ENCODE measurements at regions of chr1 and their contacts with region 1.

Region 1: GRCh38 chr1:231272880-231273279 is 31.9 kb downstream of the GNPAT start:
- DNase-seq: peak; percentile 16
- H3K4me3 Mint-ChIP-seq: peak overlapping the region; percentile 71
- H3K27ac Mint-ChIP-seq: peak overlapping the region; percentile 99
- H3K4me1 Mint-ChIP-seq: peaks cover 36% of the 10 kb centered on the region
- H3K27me3 Mint-ChIP-seq: no peaks in the 10 kb centered on the region

Region 2: GRCh38 chr1:230972855-230973271 is 300.0 kb before region 1 on chr1:
- intact Hi-C with region 1: loop called (anchors 2 kb)
- DNase-seq: peak; percentile 65
- H3K4me3 Mint-ChIP-seq: peak overlapping the region; percentile 54
- H3K27ac Mint-ChIP-seq: peak overlapping the region; percentile 70
- H3K4me1 Mint-ChIP-seq: peaks cover 55% of the 10 kb centered on the region
- H3K27me3 Mint-ChIP-seq: no peaks in the 10 kb centered on the region

Region 3: DNA sequence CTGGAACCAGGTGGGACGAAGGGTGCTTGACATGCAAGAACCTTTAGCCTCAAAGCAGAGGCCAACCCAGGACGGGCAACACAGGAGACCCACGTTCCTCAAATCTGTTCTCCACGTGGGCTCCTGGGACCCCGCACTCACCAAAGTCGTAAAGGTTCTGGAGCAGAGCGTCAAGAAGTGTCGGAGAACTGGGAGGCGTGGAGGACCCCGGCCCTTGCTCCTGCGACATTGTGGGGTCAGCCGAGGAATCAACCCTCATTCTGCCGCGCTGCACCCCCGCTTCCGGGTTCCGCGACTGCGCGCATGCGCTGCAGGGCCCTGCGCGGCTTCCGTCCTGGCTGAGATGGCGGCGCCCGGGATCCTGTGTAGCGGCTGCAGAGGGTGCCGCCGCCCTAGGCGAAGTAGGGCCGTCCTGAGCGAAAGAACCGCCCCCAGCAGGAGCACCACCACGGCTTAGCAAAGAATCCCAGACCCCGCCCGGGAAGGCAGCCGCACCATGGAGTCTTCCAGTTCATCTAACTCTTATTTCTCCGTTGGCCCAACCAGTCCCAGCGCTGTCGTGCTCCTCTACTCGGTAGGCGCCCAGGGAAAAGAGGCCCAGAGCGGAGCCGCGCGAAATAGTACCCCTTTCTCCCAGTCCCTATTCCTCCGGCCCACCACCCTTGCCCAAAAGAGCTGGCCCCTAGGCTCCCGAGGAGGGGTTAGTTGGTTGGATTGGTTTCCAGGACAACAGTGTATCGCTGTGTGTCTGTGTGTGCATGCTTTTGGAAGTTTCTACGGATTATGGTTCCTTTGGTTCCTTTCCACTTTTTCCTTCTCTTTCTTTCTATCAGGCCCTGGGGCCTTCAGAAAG is 31.8 kb before region 1 on chr1 and contains the start of gene GNPAT:
- intact Hi-C with region 1: loop called (anchors 1 kb)
- DNase-seq: peak; percentile 89
- H3K4me3 Mint-ChIP-seq: peak within 1 kb of the TSS; percentile 99
- H3K27ac Mint-ChIP-seq: peak within 1 kb of the TSS; percentile 96
- H3K4me1 Mint-ChIP-seq: peaks cover 44% of the 10 kb centered on the region
- H3K27me3 Mint-ChIP-seq: no peaks in the 10 kb centered on the region
- total RNA-seq, gene GNPAT: 46.9 and 50.9 TPM in 2 replicates

Region 4: GRCh38 chr1:231913493-231913892 is 640.6 kb after region 1 on chr1:
- intact Hi-C with region 1: no loop called
- DNase-seq: no peak
- H3K4me3 Mint-ChIP-seq: no peak overlapping the region
- H3K27ac Mint-ChIP-seq: no peak overlapping the region
- H3K4me1 Mint-ChIP-seq: peaks cover 20% of the 10 kb centered on the region
- H3K27me3 Mint-ChIP-seq: peaks cover 10% of the 10 kb centered on the region

Measured in activated T-helper 2 cell treated with anti-CD3 and anti-CD28 coated beads, Interferon-gamma antibody, Interleukin-2, Interleukin-4, amounts not matched to agents 10 μg/mL and 5 μg/mL and 100 μg/mL, durations not matched to agents 14 hours and 24 hours and 36 hours (primary cell).